Vagina (tissue), 2 donors: ENCODE measurements at regions of chr9 and their contacts with region 1.

Region 1: DNA sequence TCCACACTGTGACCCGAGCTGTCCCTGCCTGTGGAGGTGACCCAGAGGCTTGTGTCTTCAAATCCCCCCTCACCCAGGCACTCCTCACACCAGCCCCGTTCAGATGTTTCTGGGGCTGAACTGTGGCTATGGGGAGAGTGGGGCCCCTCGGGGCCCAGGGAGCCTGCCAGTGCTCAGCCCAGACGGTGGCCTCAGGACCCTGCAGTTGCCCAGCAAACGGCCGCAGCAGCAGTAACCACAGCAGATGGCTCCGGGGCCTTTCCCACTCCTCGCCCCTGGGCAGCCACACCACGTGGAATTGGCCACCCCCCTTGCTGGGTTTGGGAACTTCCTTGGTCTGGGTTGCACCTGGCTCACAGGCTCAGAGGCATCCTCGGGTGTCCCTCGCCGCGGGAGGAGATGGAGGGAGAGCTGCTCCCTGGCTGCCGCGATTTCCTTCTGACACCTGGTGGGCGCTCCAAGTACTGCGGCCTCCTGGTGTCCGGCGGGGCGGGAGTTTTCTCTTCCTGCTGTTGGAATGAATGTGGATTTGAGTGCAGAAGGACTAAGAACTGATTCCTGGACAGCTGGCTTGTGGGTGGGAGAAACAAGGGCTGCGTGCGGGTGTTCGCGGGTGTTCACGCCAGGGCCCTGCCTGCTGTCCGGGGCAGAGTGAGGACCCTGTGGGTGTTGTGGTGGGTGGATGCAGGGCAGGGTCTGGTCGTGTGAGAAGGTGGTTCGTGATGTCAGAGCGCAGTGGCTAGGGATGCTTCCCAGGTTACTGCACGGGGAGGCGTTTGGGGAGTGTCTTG is 97.5 kb downstream of the COL5A1 start:
- DNase-seq: no peak
- H3K4me3 ChIP-seq: no peak overlapping the region
- H3K27ac ChIP-seq: peak overlapping the region; percentile 60
- H3K4me1 ChIP-seq: peaks cover 27% of the 10 kb centered on the region
- H3K27me3 ChIP-seq: no peaks in the 10 kb centered on the region
- CTCF ChIP-seq: peak; percentile 86 to 89 (median 88)
- POLR2A ChIP-seq: no peak

Region 2: DNA sequence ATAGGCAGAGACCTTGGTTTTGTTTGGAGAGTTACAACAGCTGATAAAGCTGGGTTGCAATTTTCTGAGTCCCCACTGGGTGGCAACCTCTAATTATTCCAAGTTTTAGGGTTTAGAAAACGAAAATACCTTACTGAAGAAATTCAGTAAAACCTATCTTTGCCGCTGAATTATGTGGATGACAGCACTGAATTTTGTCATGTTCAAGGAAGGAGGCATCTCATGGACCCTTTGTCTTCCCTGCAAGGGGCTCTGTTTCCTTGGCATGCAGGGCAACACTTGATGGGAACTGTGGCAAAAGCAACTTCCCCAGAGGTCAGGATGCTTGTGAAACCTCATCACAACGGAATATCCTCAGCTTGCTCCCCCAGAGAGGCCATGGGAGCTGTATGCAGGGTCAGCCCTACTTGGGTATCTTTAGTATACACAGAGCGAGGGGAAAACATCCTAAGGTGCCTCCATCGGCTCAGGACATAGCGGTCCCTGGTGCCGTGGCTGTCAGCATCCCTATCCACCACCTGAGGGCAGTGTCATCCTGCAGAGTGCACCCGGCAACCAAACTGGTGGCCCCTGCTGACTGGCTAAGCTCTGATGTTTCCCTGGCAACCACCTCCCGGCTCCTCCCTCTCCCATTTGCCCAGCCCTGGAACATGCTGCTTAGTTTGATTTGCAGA is 289.7 kb before region 1 on chr9:
- intact Hi-C with region 1: loop called (anchors 5 kb)
- DNase-seq: peak in 1 of 2 donors; percentile 96
- H3K4me3 ChIP-seq: no peak overlapping the region
- H3K27ac ChIP-seq: no peak overlapping the region
- H3K4me1 ChIP-seq: no peaks in the 10 kb centered on the region
- H3K27me3 ChIP-seq: no peaks in the 10 kb centered on the region
- CTCF ChIP-seq: peak; percentile 73 to 94 (median 91)
- POLR2A ChIP-seq: no peak

Region 3: DNA sequence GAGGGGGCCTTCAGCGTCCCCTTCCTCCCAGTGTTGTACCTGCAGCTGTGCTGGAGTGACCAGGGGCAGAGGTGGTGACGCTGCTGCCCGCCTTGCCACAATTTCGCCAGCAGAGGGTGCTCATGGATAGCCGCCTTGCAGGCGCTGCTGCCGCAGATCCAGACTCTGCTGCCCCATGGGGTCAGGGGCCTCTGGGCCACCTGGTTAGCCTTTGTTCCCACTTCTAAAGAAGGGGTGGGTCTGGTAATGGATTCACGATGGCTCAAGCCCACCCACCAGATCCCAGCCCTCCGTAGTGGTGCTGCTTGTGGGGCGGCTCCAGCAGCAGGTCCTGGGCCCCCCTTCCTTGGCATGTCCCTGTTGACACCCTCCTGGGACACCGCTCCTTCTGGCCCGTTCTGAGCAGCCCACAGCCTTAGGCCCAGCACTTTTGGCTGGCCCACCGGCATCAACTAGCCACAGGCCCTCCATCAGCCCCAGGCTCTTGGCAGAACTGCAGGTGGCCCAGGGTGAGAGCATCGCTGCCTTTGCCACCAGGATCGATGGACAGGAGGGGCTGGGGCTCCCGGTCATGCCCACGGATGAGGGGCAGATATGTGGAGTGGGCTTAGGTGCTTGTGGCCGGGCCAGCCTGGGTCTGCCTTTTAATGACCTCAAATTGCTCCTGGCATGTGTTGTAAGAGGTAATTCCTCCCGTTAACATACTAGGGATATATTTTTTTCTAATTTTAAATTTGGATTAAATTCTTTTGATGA is 40.3 kb before region 1 on chr9:
- intact Hi-C with region 1: loop called (anchors 2 kb)
- DNase-seq: no peak
- H3K4me3 ChIP-seq: no peak overlapping the region
- H3K27ac ChIP-seq: peak overlapping the region; percentile 45
- H3K4me1 ChIP-seq: peaks cover 60% of the 10 kb centered on the region
- H3K27me3 ChIP-seq: no peaks in the 10 kb centered on the region
- CTCF ChIP-seq: peak; percentile 71 to 85 (median 84)
- POLR2A ChIP-seq: no peak